ENCODE measurements at regions of chr1 and their contacts with region 1.

Region 1: DNA sequence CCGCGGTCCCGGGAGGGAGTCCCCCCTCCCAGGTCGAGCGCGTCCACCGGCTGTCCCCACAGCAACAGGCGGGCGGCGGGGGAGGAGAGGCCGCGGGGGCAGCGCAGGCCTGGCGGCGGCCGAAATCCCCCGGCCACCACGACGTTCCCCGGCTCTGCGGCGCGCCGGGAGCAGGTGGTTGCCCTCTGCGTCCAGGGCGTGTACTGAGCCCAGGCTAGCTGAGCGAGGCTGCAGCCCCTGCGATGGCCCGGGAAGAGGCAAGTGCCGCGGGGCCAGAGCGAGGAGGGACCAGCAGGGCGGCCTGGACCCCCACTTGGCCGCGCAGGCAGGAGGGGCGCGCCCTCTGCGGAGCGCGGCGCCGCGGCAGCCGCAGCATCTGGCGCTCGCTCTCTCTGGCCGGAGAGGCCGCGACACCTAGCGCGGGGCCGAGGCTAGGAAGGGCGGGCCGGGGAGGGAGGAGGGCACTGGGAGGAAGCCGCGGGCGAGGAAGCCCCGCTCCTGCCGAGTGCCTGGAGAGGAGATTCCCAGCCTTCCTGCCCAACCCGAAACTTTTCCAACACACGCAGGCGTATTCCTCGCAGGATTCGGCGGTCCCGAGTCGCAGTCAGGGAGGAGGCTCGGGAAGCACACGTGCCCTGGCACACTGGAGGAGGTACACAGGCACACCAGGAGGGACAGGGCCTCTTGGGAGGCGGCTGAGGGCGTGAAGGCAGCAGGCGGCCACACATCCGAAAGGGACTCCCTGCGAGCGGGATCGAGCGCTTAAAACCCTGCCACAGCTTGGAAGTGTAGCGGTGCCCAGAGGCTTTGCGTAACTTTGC is 4.9 kb upstream of the PROX1 start:
- DNase-seq: peak in 4 of 5 donors; percentile 35 to 70 (median 40)
- ATAC-seq: peak; percentile 38 to 76 (median 58)
- H3K4me3 ChIP-seq: peak overlapping the region; percentile 16 to 59 (median 44)
- H3K27ac ChIP-seq: no peak overlapping the region
- H3K4me1 ChIP-seq: peaks cover 0 to 33% (median 10%) of the 10 kb centered on the region in 12 donors
- H3K27me3 ChIP-seq: peaks cover 6 to 94% (median 59%) of the 10 kb centered on the region in 9 donors
- CTCF ChIP-seq: peak in 4 of 12 donors; percentile 0 to 34 (median 21)
- POLR2A ChIP-seq: no peak

Region 2: GRCh38 chr1:213564215-213564659 is 418.6 kb before region 1 on chr1:
- intact Hi-C with region 1: loop called in 7 of 10 experiments (anchors 2 to 10 kb)
- DNase-seq: no peak
- ATAC-seq: peak in 1 of 4 donors; percentile 49
- H3K4me3 ChIP-seq: no peak overlapping the region
- H3K27ac ChIP-seq: no peak overlapping the region
- H3K4me1 ChIP-seq: no peaks in the 10 kb centered on the region
- H3K27me3 ChIP-seq: no peaks in the 10 kb centered on the region
- CTCF ChIP-seq: peak; percentile 13 to 50 (median 34)
- POLR2A ChIP-seq: no peak